A673 (cell line): ENCODE measurements at regions of chr1 and their contacts with region 1.

Region 1: GRCh38 chr1:86356247-86356646 is 39.9 kb downstream of the ODF2L start:
- DNase-seq: no peak
- H3K4me3 ChIP-seq: no peak overlapping the region
- H3K27ac ChIP-seq: no peak overlapping the region
- H3K4me1 ChIP-seq: no peaks in the 10 kb centered on the region
- H3K27me3 ChIP-seq: no peaks in the 10 kb centered on the region
- CTCF ChIP-seq: peak; percentile 41; the same call in 1 of the 2 replicates

Region 2: GRCh38 chr1:85894651-85895050 is 461.6 kb before region 1 on chr1:
- CTCF ChIA-PET with region 1: no interaction called
- POLR2A ChIA-PET with region 1: no interaction called
- intact Hi-C with region 1: loop called (anchors 5 kb)
- DNase-seq: peak; percentile 54
- H3K4me3 ChIP-seq: no peak overlapping the region
- H3K27ac ChIP-seq: no peak overlapping the region
- H3K4me1 ChIP-seq: no peaks in the 10 kb centered on the region
- H3K27me3 ChIP-seq: no peaks in the 10 kb centered on the region
- CTCF ChIP-seq: peak; percentile 69

Region 3: GRCh38 chr1:85952460-85952859 is 403.8 kb before region 1 on chr1:
- CTCF ChIA-PET with region 1: no interaction called
- POLR2A ChIA-PET with region 1: no interaction called
- intact Hi-C with region 1: no loop called
- DNase-seq: peak; percentile 7
- H3K4me3 ChIP-seq: no peak overlapping the region
- H3K27ac ChIP-seq: no peak overlapping the region
- H3K4me1 ChIP-seq: no peaks in the 10 kb centered on the region
- H3K27me3 ChIP-seq: no peaks in the 10 kb centered on the region
- CTCF ChIP-seq: no peak

Region 4: GRCh38 chr1:86441581-86441980 is 85.3 kb after region 1 on chr1:
- CTCF ChIA-PET with region 1: no interaction called
- POLR2A ChIA-PET with region 1: no interaction called
- intact Hi-C with region 1: no loop called
- DNase-seq: no peak
- H3K4me3 ChIP-seq: no peak overlapping the region
- H3K27ac ChIP-seq: no peak overlapping the region
- H3K4me1 ChIP-seq: no peaks in the 10 kb centered on the region
- H3K27me3 ChIP-seq: no peaks in the 10 kb centered on the region
- CTCF ChIP-seq: no peak

Region 5: DNA sequence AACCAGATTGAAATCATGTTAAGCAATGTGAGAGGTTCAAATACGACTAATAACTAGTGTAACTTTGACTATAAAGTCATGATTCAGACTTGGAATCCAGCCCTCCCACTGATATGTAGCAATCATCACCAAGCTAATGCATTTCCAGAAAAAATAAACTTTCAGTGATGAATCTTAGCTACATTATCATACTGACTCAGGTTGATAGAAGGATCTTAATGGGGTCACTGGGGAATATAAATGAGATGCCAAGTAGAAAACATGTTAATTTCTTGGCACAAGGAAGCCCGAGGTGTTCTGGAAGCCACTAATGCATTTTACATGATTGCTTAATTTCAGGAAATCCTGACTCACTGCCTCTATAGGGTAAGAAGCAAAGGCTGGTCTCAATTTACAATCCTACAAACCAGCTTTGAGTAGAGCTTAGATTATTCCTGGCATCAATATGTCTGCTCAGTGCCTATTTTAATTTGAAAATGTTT is 490.0 kb after region 1 on chr1:
- CTCF ChIA-PET with region 1: no interaction called
- POLR2A ChIA-PET with region 1: no interaction called
- intact Hi-C with region 1: no loop called
- DNase-seq: peak; percentile 95
- H3K4me3 ChIP-seq: no peak overlapping the region
- H3K27ac ChIP-seq: peak overlapping the region; percentile 34
- H3K4me1 ChIP-seq: peaks cover 18% of the 10 kb centered on the region
- H3K27me3 ChIP-seq: no peaks in the 10 kb centered on the region
- CTCF ChIP-seq: no peak